Ovary (tissue), 10 donors: ENCODE measurements at regions of chr13 and their contacts with region 1.

Region 1: GRCh38 chr13:92984151-92984550 is 242.5 kb upstream of the GPC6 start:
- DNase-seq: no peak
- H3K4me3 ChIP-seq: no peak overlapping the region
- H3K27ac ChIP-seq: no peak overlapping the region
- H3K4me1 ChIP-seq: no peaks in the 10 kb centered on the region
- H3K27me3 ChIP-seq: no peaks in the 10 kb centered on the region
- CTCF ChIP-seq: no peak
- EP300 ChIP-seq: no peak
- POLR2A ChIP-seq: no peak

Region 2: DNA sequence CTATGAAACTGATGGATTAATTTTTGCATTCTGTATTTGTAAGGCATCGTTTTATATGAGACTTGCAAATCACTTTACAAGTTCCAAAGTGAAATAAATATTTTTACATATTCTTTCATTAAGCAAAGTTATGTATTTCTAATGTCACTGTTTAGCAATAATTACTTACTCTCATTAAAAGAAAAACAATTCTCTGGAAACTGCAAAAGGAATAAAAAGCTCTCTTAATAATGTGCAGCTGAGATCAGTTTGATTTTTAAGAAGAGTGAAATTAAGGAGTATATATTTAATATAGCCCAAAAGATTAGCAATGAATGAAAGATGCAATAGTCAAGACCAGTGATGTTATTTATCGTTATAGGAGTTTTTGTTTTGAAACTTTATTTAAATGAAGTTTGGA is 1430.6 kb before region 1 on chr13:
- intact Hi-C with region 1: loop called in 1 of 4 experiments (anchors 5 kb)
- DNase-seq: no peak
- H3K4me3 ChIP-seq: no peak overlapping the region
- H3K27ac ChIP-seq: no peak overlapping the region
- H3K4me1 ChIP-seq: no peaks in the 10 kb centered on the region
- H3K27me3 ChIP-seq: no peaks in the 10 kb centered on the region
- CTCF ChIP-seq: no peak
- EP300 ChIP-seq: no peak
- POLR2A ChIP-seq: no peak

Region 3: DNA sequence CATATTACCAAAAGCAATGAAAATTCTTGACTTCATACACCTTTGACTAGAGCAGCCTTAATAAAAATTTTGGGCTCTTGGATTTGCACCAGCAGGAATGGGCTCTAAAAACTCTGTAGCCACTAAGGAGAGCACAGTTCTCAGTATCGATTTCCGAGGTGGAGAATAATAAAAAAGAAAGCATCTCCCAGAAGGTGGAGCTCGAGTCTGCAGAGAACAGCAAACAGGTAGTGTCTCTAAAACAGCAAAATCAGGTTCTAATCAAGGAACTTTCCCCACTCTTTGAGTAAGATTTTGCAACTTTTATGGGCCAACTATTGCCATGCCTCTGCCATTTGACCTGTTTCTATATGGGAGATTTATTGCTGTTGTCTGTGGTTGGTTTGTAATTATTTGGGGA is 16.2 kb before region 1 on chr13:
- intact Hi-C with region 1: no loop called
- DNase-seq: no peak
- H3K4me3 ChIP-seq: no peak overlapping the region
- H3K27ac ChIP-seq: no peak overlapping the region
- H3K4me1 ChIP-seq: no peaks in the 10 kb centered on the region
- H3K27me3 ChIP-seq: no peaks in the 10 kb centered on the region
- CTCF ChIP-seq: no peak
- EP300 ChIP-seq: no peak
- POLR2A ChIP-seq: no peak